Endothelial cell of umbilical vein (primary cell): ENCODE measurements at regions of chr19 and their contacts with region 1.

Region 1: DNA sequence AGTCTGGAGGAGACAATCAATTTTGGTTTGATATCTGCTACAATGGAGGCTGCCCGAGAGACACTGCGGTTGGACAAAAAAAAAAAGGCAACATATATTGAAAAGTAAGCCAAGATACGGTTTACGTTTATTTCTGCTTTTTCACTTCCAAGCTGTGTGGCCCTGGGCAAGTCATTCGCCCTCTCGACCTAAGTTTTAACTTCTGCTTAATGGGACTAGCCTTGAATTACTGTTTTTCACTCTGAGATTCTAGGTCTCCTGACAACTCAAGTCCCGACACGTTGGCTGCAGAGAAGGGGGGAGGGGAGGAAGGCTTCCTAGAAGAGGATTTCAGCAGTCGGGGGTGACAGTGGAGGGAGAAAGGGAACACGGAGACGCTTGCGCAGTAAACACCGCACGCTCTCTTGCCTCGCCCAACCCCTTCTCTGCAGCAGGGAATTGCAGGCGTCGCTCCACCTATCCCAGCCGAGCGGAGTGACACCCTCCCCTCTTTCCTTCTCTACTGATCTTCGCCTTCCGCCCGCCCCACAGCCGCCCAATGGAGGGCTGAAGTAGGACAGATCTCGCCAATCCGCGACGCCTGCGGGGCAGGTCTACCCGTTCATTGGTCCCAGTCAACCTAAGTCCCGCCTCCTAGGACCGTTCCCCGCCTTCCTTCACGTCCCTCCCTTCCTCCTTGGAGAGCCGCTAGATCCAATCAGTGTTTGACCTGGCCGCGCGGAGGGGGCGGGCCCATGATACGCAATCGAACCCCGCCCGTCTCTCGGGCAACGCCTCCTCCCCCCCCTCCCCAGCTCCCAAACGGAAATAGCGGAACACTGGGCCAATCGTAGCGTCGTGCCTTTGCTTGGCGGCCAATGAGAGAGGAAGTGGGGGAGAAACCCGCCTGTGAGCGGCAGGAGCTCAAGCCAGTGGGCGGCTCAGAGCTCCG is 529 bp upstream of the AP2A1 start:
- DNase-seq: peak; percentile 100
- H3K4me3 ChIP-seq: peak overlapping the region in 2 of 3 experiments; percentile 49 to 97
- H3K27ac ChIP-seq: peak overlapping the region; percentile 41
- H3K4me1 ChIP-seq: peaks cover 12% of the 10 kb centered on the region
- H3K27me3 ChIP-seq: no peaks in the 10 kb centered on the region
- CTCF ChIP-seq: no peak
- POLR2A ChIP-seq: peak; percentile 72

Region 2: DNA sequence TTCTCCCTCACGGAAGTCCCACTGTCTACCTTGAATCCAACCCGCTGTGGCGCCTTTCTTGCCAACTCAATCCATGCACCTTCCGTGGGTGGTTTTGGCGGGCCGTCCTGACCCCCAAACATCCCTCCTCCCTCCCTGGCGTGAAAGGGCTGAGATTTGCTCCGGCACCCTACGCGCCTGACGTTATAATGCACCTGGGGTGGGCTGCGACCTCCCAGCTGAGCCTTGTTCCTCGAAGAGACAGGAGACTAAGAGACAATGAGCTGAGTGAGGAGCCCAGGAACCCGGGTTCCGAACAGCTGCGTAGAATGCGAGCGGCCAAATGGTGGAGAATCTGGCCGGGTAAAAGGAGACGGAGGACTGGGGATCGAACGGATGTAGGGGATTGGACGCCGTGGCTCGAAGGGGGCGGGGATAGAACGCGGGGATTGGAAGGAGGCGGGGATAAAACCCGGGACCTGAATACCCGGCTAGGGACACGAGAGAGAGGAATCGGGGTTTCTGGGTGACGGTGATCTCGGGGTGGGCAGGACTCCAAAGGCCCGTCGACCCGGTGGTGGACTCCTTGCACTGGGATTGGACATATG is 75.5 kb before region 1 on chr19 and contains the start of gene CPT1C:
- CTCF ChIA-PET with region 1: no interaction called
- POLR2A ChIA-PET with region 1: no interaction called
- dilution Hi-C with region 1: no loop called
- intact Hi-C with region 1: loop called (anchors 1 kb)
- DNase-seq: peak; percentile 83
- H3K4me3 ChIP-seq: peak within 1 kb of the TSS; percentile 17 to 74 (median 59)
- H3K27ac ChIP-seq: no peak within 1 kb of the TSS
- H3K4me1 ChIP-seq: peaks cover 40% of the 10 kb centered on the region
- H3K27me3 ChIP-seq: no peaks in the 10 kb centered on the region
- CTCF ChIP-seq: no peak
- POLR2A ChIP-seq: peak; percentile 79
- total RNA-seq, gene CPT1C: 24.7 and 45.7 TPM in 2 replicates

Region 3: GRCh38 chr19:49808711-49809159 is 42.5 kb after region 1 on chr19:
- CTCF ChIA-PET with region 1: no interaction called
- POLR2A ChIA-PET with region 1: no interaction called
- dilution Hi-C with region 1: no loop called
- intact Hi-C with region 1: loop called (anchors 1 kb)
- DNase-seq: peak; percentile 85
- H3K4me3 ChIP-seq: peak overlapping the region; percentile 46 to 59 (median 59)
- H3K27ac ChIP-seq: no peak overlapping the region
- H3K4me1 ChIP-seq: peaks cover 15% of the 10 kb centered on the region
- H3K27me3 ChIP-seq: no peaks in the 10 kb centered on the region
- CTCF ChIP-seq: no peak
- POLR2A ChIP-seq: no peak

Region 4: GRCh38 chr19:49850473-49851342 is 84.4 kb after region 1 on chr19 and contains the start of gene PTOV1:
- CTCF ChIA-PET with region 1: no interaction called
- POLR2A ChIA-PET with region 1: interaction called, 6 read pairs
- dilution Hi-C with region 1: no loop called
- intact Hi-C with region 1: loop called (anchors 1 kb)
- DNase-seq: peak; percentile 91
- H3K4me3 ChIP-seq: peak within 1 kb of the TSS; percentile 15 to 67 (median 57)
- H3K27ac ChIP-seq: peak within 1 kb of the TSS; percentile 68
- H3K4me1 ChIP-seq: peaks cover 24% of the 10 kb centered on the region
- H3K27me3 ChIP-seq: no peaks in the 10 kb centered on the region
- CTCF ChIP-seq: no peak
- POLR2A ChIP-seq: peak; percentile 71
- total RNA-seq, gene PTOV1: 184 and 187 TPM in 2 replicates

Region 5: DNA sequence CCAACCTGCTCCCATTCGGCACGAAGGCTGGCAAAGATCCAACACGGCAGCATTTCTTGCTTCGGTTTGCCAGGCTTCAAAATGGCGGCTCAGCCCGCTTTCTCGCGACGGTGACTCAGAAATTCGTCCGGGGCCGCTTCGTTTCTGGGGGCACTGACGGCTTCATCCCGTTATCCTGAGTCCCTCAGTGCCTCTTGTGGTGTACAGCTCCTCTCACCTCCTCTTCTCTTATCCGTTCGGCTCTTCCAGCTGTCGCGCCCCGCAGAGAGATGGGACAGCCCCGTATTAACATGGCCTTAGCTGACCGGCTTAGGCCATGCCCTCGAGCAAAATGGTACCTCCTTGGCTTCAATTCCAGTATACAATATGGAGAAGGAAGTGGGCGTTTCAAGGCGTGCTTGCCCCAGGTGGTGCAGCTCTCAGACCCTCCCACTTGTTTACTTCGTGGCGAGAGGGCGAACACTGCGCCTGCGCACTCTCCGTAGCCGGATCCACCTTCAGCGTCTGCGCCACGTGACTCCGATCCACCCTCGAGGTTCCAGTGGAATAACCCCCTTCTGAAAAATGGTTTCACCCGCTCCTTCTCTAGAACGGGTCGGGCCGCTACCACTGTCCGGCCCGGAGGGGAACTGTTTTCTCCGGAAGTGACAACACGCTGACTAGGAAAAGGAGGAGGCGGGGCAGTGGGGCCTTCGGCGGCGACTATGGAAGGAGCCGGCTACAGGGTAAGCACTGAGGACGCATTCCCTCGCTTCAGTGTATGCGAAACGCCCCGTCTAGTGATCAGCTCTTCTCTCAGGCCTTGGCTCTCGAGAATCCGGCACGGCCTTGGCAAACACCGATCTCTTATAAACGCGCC is 111.0 kb after region 1 on chr19 and contains the starts of genes AKT1S1 and TBC1D17:
- CTCF ChIA-PET with region 1: no interaction called
- POLR2A ChIA-PET with region 1: no interaction called
- dilution Hi-C with region 1: no loop called
- intact Hi-C with region 1: loop called (anchors 1 kb)
- DNase-seq: peak; percentile 100
- H3K4me3 ChIP-seq: peak within 1 kb of the TSS; percentile 38 to 81 (median 70)
- H3K27ac ChIP-seq: peak within 1 kb of the TSS; percentile 84
- H3K4me1 ChIP-seq: peaks cover 14% of the 10 kb centered on the region
- H3K27me3 ChIP-seq: no peaks in the 10 kb centered on the region
- CTCF ChIP-seq: no peak
- POLR2A ChIP-seq: peak; percentile 84
- total RNA-seq, gene AKT1S1: 61.9 and 64.2 TPM in 2 replicates
- total RNA-seq, gene TBC1D17: 36.1 and 39.3 TPM in 2 replicates